H1 (cell line): ENCODE measurements at regions of chr19 and their contacts with region 1.

Region 1: GRCh38 chr19:4567584-4568071 is 8.1 kb upstream of the SEMA6B start:
- DNase-seq: peak; percentile 66 to 99
- H3K4me3 ChIP-seq: no peak overlapping the region
- H3K27ac ChIP-seq: no peak overlapping the region
- H3K4me1 ChIP-seq: peaks cover 0 to 2% (median 0%) of the 10 kb centered on the region in 4 experiments; a peak in 1 of 7 replicates
- H3K27me3 ChIP-seq: no peaks in the 10 kb centered on the region
- CTCF ChIP-seq: peak; percentile 91 to 100 (median 99)
- EP300 ChIP-seq: no peak
- POLR2A ChIP-seq: no peak
- RAD21 ChIP-seq: peak; percentile 59 to 69

Region 2: DNA sequence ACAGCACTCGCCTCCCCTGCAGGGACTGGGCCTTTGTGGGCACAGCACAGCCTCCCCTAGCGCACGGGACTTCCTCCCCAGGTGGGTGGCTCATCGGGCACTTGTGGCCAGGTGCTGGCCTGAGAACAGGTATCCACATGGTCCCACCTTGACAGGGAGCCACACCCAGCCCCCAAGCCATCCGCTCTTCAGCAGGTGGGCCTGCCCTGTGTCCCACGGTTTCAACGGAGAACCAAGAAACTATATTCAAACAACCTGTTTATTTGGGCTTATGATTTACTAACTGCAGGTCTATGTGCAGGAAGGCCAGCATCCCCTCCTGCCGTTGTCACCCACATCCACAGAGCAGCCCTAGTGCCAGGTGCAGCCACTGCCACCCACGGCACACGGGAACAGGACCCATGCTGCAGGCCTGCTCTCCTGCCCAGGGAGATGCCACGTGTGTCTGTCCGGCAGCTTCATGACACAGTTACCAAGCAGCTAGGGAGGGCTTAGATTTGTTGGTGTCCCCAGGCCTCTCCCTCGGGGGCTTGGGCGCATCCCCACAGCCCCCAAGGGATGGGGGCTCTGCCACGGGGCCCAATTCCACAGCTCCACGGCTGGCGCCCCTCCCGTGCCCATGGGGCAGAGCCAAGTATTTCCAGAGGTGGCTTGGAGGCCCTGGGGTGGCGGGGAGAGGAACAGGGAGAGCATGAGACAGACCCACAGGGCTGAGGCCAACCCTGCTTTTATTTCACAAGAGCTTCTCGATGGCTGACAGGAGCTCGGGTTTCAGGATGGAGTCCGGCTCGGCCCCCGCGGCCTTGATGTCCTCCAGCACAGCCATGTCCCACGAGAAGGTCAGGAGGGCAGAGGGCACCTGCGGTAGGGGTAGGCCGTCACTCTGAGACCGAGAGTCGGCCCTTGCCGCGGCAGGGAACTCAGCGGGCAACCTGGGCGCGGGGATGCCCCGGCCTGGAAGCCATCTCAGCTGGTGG is 122.6 kb before region 1 on chr19:
- CTCF ChIA-PET with region 1: no interaction called
- POLR2A ChIA-PET with region 1: no interaction called
- DNase-seq: peak in 1 of 2 experiments; percentile 52
- H3K4me3 ChIP-seq: no peak overlapping the region
- H3K27ac ChIP-seq: peak overlapping the region; percentile 38
- H3K4me1 ChIP-seq: peaks cover 0 to 2% (median 0%) of the 10 kb centered on the region in 4 experiments; a peak in 4 of 7 replicates
- H3K27me3 ChIP-seq: no peaks in the 10 kb centered on the region
- CTCF ChIP-seq: no peak
- EP300 ChIP-seq: no peak
- POLR2A ChIP-seq: peak in 1 of 2 experiments; percentile 39; a peak in 2 of 3 replicates
- RAD21 ChIP-seq: no peak

Region 3: GRCh38 chr19:4589579-4590410 is 22.2 kb after region 1 on chr19:
- CTCF ChIA-PET with region 1: interaction called, 34 read pairs
- POLR2A ChIA-PET with region 1: interaction called, 19 read pairs
- DNase-seq: peak in 1 of 2 experiments; percentile 57
- H3K4me3 ChIP-seq: no peak overlapping the region
- H3K27ac ChIP-seq: no peak overlapping the region
- H3K4me1 ChIP-seq: no peaks in the 10 kb centered on the region; a peak in 1 of 7 replicates
- H3K27me3 ChIP-seq: peaks cover 0 to 6% (median 4%) of the 10 kb centered on the region in 4 experiments; a peak in 3 of 7 replicates
- CTCF ChIP-seq: peak; percentile 27 to 33 (median 31)
- EP300 ChIP-seq: no peak
- POLR2A ChIP-seq: no peak
- RAD21 ChIP-seq: peak; percentile 21 to 29; a peak in 2 of 4 replicates

Region 4: GRCh38 chr19:4606921-4607678 is 39.5 kb after region 1 on chr19:
- CTCF ChIA-PET with region 1: interaction called, 12 read pairs
- POLR2A ChIA-PET with region 1: interaction called, 4 read pairs
- DNase-seq: peak in 1 of 2 experiments; percentile 74
- H3K4me3 ChIP-seq: peak overlapping the region; percentile 3 to 47 (median 25); a peak in 5 of 8 replicates
- H3K27ac ChIP-seq: no peak overlapping the region
- H3K4me1 ChIP-seq: peaks cover 0 to 4% (median 2%) of the 10 kb centered on the region in 4 experiments; a peak in 4 of 7 replicates
- H3K27me3 ChIP-seq: peaks cover 0 to 2% (median 0%) of the 10 kb centered on the region in 4 experiments; a peak in 4 of 7 replicates
- CTCF ChIP-seq: peak; percentile 50 to 68 (median 62)
- EP300 ChIP-seq: no peak
- POLR2A ChIP-seq: no peak
- RAD21 ChIP-seq: peak; percentile 53 to 70

Region 5: GRCh38 chr19:4638828-4639530 is 71.4 kb after region 1 on chr19 and contains the start of gene TNFAIP8L1:
- CTCF ChIA-PET with region 1: interaction called, 316 read pairs
- POLR2A ChIA-PET with region 1: interaction called, 3 read pairs
- DNase-seq: peak; percentile 81 to 99
- H3K4me3 ChIP-seq: peak within 1 kb of the TSS; percentile 45 to 69 (median 58)
- H3K27ac ChIP-seq: peak within 1 kb of the TSS; percentile 35; the same call in 1 of the 2 replicates
- H3K4me1 ChIP-seq: peaks cover 0 to 10% (median 6%) of the 10 kb centered on the region in 4 experiments; a peak in 3 of 7 replicates
- H3K27me3 ChIP-seq: peaks cover 0 to 13% (median 10%) of the 10 kb centered on the region in 4 experiments; a peak in 5 of 7 replicates
- CTCF ChIP-seq: no peak
- EP300 ChIP-seq: no peak
- POLR2A ChIP-seq: peak in 1 of 2 experiments; percentile 56; a peak in 2 of 3 replicates
- RAD21 ChIP-seq: no peak
- total RNA-seq, gene TNFAIP8L1: 5.9 and 6.1 TPM in 2 replicates